Activated T-helper 2 cell treated with anti-CD3 and anti-CD28 coated beads, Interferon-gamma antibody, Interleukin-2, Interleukin-4, amounts not matched to agents 10 μg/mL and 5 μg/mL and 100 μg/mL, durations not matched to agents 14 hours and 24 hours and 36 hours (primary cell): ENCODE measurements at regions of chr2 and their contacts with region 1.

Region 1: GRCh38 chr2:145323512-145323911 is 803.6 kb upstream of the ZEB2 start:
- DNase-seq: peak; percentile 9
- H3K4me3 Mint-ChIP-seq: no peak overlapping the region
- H3K27ac Mint-ChIP-seq: peak overlapping the region; percentile 20
- H3K4me1 Mint-ChIP-seq: peaks cover 18% of the 10 kb centered on the region
- H3K27me3 Mint-ChIP-seq: peaks cover 26% of the 10 kb centered on the region

Region 2: GRCh38 chr2:145744541-145745386 is 421.3 kb after region 1 on chr2:
- intact Hi-C with region 1: loop called (anchors 10 kb)
- DNase-seq: no peak
- H3K4me3 Mint-ChIP-seq: no peak overlapping the region
- H3K27ac Mint-ChIP-seq: peak overlapping the region; percentile 31
- H3K4me1 Mint-ChIP-seq: peaks cover 27% of the 10 kb centered on the region
- H3K27me3 Mint-ChIP-seq: peaks cover 11% of the 10 kb centered on the region